ENCODE measurements at regions of chr11 and their contacts with region 1.

Region 1: DNA sequence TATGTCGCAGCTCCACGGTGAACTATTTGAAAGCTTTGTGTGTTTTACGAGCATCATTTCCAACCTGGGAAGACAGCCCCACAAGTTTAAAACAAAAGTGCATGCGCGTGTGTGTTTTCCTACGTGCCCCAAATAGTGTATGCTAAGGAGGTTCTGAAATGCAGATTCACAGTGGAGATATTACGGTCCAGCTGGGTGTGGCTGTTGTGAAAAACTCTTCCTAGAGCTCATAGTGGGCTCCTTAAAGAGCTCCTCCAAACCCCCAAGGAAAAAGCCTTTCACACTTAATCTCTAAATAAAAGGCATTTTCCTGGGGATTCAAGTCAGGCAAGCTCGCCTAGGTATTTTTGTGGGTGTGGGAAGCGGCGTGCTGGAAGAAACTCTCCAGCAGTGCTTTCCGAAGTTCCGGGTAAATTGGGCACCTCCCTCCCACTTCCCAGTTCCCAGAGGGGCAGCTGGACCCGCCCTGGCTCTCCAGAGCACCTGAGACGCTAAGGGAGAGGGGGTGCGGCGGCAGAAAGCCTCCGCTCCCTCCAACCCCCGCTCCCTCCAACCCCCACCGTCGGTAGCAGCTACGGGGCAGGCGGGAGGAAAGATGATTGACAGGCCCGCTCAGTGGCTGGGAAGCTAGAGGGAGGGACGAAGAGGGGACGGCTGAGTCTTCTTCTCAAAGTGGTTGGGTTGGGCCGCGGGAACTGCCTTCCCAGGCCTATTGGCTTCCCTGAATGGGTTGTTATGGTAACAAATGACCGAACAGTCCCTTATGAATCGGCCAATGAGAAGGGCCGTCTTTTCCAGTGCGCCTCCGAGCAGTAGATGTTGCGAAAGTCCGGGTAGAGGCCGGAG is 558 bp upstream of the PCF11 start:
- DNase-seq: peak; percentile 99 to 100
- H3K4me3 ChIP-seq: peak overlapping the region; percentile 70 to 95
- H3K27ac ChIP-seq: peak overlapping the region; percentile 89 to 94
- H3K4me1 ChIP-seq: peaks cover 5 to 6% of the 10 kb centered on the region in 2 donors
- H3K27me3 ChIP-seq: no peaks in the 10 kb centered on the region
- CTCF ChIP-seq: no peak

Region 2: GRCh38 chr11:82718307-82718706 is 438.1 kb before region 1 on chr11:
- intact Hi-C with region 1: loop called (anchors 10 kb)
- DNase-seq: no peak
- H3K4me3 ChIP-seq: no peak overlapping the region
- H3K27ac ChIP-seq: peak overlapping the region in 1 of 2 donors; percentile 5
- H3K4me1 ChIP-seq: peaks cover 0 to 21% of the 10 kb centered on the region in 2 donors
- H3K27me3 ChIP-seq: no peaks in the 10 kb centered on the region
- CTCF ChIP-seq: peak; percentile 60 to 82 (median 62)

Region 3: GRCh38 chr11:82900277-82901164 is 255.9 kb before region 1 on chr11 and contains the start of gene PRCP:
- intact Hi-C with region 1: loop called (anchors 1 kb)
- DNase-seq: peak; percentile 86 to 97
- H3K4me3 ChIP-seq: peak within 1 kb of the TSS; percentile 70 to 80
- H3K27ac ChIP-seq: peak within 1 kb of the TSS; percentile 84 to 92
- H3K4me1 ChIP-seq: peaks cover 0 to 3% of the 10 kb centered on the region in 2 donors
- H3K27me3 ChIP-seq: no peaks in the 10 kb centered on the region
- CTCF ChIP-seq: no peak
- total RNA-seq, gene PRCP: 151 TPM

Region 4: GRCh38 chr11:83051760-83052671 is 104.4 kb before region 1 on chr11:
- intact Hi-C with region 1: loop called (anchors 2 kb)
- DNase-seq: peak in 1 of 2 donors; percentile 79
- H3K4me3 ChIP-seq: no peak overlapping the region
- H3K27ac ChIP-seq: peak overlapping the region; percentile 89 to 92
- H3K4me1 ChIP-seq: peaks cover 0 to 22% of the 10 kb centered on the region in 2 donors
- H3K27me3 ChIP-seq: no peaks in the 10 kb centered on the region
- CTCF ChIP-seq: no peak

Region 5: DNA sequence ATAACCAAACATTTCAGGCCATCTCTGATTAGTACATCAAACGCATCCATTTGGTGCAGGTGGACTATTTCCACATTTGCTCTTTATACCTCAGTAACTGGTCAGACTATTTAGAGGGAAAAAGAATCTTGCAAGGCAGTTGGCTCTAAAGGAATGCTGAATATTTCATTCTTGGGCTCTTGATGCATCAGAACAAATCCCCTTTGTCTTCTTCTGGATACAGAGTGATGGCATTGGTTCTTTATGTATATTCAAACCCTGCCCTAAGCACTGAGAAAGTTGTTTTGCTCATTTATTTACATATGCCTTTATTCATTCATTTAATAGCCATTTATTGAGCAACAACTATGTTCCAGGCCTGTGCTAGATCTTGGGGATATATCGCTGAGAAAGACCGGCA is 53.5 kb before region 1 on chr11:
- intact Hi-C with region 1: no loop called
- DNase-seq: no peak
- H3K4me3 ChIP-seq: no peak overlapping the region
- H3K27ac ChIP-seq: no peak overlapping the region
- H3K4me1 ChIP-seq: peaks cover 0 to 2% of the 10 kb centered on the region in 2 donors
- H3K27me3 ChIP-seq: no peaks in the 10 kb centered on the region
- CTCF ChIP-seq: no peak

Region 6: DNA sequence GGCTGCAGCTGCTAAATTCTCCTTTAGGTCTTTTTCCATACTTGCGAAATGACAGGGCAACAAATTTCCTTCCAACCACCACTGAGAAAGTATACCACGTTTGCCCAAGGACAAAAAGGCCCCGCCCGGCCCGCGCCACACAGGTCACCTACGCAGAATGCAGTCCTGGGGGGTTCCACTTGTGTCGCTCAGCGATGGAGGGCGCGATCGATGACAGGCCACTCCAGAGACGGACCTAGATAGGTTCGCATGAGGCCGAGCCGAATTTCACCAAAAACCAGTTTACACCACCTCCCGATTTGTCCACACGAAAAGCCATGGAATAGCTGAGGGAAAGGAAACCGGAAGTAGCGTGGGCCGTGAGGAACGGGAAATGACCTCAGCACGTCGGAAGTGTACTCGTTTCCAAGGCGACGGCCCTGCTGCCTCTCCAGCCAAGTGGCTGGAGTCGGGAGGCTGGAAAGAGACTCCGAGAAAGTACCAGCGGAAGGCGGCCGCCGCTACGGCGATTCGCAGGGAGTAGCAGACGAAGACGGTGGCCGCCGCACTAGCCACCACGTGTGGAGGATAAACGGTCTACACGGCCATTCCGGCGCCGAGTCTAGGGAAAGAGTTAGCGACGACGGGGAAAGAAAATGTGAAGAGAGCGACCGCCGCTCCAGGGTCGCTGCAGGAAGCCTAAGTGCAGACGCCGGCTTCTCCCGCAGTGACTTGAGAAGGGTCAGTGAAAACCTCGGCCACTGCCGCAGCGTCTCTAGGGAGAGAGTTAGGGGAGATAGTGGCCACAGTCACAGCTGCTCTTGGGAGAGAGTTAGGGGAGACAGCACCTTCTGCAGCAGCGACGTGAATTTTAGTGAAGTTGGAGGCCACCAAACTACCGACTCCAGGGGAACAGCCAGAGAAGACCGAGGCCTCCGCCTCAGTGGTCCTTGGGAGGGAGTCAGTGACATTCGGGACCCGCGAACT is 37.2 kb after region 1 on chr11 and contains the start of gene ANKRD42:
- intact Hi-C with region 1: loop called (anchors 1 kb)
- DNase-seq: peak; percentile 78 to 97
- H3K4me3 ChIP-seq: peak within 1 kb of the TSS; percentile 73 to 93
- H3K27ac ChIP-seq: peak within 1 kb of the TSS; percentile 86 to 92
- H3K4me1 ChIP-seq: peaks cover 4 to 23% of the 10 kb centered on the region in 2 donors
- H3K27me3 ChIP-seq: no peaks in the 10 kb centered on the region
- CTCF ChIP-seq: no peak
- total RNA-seq, gene ANKRD42: 25.1 TPM

Region 7: DNA sequence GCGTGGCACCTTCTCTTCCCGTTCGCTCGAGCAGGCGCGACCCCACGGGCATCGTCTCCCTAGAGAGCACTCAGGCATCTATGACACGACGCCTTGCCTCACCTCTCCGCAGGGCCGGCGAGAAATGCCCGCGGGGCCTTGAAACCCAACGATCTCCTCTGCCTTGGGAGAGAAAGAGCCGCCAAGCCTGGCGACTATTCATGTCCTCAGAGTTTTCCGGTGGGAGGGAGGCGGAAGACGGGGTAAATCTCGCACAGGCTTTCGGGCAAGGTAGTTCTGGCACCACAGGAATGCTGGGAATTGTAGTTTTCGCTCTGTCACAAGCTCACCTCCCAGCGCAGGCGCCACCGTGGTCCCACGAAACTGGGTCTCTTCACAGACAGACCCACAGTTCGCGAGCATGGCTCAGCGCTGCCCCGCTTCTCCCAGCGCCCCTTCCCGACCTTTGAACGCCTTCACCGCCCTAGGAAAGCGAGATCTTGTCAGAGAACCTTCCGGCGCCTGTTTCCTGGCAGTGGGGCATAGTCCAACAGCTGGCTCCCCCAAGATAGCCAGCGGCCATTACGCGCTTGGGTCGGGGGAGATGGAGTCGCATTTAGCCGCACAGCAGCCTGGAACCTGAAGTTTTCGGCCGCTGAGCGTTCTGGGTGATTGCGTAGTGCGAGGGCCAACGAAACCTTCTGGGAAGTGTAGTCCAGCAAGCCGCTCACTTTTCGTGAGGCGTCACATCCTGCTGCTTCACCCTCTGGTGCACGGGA is 129.6 kb after region 1 on chr11 and contains the start of gene CCDC90B:
- intact Hi-C with region 1: loop called (anchors 1 kb)
- DNase-seq: peak; percentile 89 to 98
- H3K4me3 ChIP-seq: peak within 1 kb of the TSS; percentile 86 to 87
- H3K27ac ChIP-seq: peak within 1 kb of the TSS; percentile 94 to 98
- H3K4me1 ChIP-seq: peaks cover 0 to 20% of the 10 kb centered on the region in 2 donors
- H3K27me3 ChIP-seq: no peaks in the 10 kb centered on the region
- CTCF ChIP-seq: peak in 1 of 3 experiments; percentile 22
- total RNA-seq, gene CCDC90B: 8.2 TPM

Region 8: DNA sequence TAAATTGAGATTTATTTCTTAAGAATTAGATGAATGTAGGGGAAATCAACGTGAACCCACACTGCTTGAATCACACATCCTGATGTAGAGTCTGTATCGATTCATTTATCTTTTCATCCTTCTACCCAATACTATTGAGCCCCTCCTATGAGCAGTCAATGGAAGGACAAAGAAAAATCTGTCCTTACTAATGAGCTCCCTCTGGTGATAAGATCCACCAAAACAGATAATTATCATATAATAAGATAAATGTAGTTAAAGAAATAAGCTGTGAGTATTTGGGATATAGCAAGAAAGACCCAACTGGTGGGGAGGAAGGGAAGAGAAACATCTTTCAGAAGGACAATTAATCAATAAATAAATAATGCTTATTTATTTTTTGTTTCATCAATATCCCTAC is 514.9 kb after region 1 on chr11:
- intact Hi-C with region 1: no loop called
- DNase-seq: no peak
- H3K4me3 ChIP-seq: no peak overlapping the region
- H3K27ac ChIP-seq: no peak overlapping the region
- H3K4me1 ChIP-seq: no peaks in the 10 kb centered on the region
- H3K27me3 ChIP-seq: no peaks in the 10 kb centered on the region
- CTCF ChIP-seq: no peak